Common myeloid progenitor, CD34-positive (primary cell): ENCODE measurements at regions of chr14 and their contacts with region 1.

Region 1: DNA sequence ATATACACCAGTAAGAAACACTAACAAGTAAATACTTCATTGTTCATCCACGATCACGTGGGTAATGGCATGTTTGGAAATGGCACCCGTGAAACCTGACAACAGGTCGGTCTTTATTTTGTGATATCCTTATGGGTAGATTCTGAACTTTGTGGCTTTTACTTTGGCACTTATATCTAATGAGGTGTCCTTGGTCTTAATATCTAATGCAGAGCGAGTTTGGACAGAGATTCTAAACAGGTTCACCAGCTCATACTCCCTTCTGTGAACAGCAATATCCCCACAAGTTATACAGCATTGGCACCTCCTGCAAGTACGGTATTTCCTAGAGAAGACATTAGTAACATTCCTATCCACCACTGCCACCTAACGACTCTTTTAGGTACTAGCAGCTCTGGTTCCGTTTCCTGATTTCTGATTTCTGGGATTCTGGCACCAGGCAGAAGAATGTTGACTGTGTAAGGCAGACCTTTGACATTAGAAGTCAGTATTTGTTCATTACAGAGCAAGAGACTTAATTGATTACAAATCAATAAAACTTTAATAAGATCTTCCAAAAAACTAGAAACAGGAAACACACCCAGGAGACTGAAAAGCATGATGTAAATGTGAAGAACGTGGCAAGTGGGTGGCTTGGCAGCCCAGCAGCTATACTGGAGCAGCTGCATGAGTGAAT is 2.4 kb downstream of the ANG start:
- DNase-seq: peak; percentile 75 to 85 (median 82)
- H3K4me3 ChIP-seq: no peak overlapping the region
- H3K27ac ChIP-seq: no peak overlapping the region
- H3K4me1 ChIP-seq: no peaks in the 10 kb centered on the region
- H3K27me3 ChIP-seq: no peaks in the 10 kb centered on the region

Region 2: DNA sequence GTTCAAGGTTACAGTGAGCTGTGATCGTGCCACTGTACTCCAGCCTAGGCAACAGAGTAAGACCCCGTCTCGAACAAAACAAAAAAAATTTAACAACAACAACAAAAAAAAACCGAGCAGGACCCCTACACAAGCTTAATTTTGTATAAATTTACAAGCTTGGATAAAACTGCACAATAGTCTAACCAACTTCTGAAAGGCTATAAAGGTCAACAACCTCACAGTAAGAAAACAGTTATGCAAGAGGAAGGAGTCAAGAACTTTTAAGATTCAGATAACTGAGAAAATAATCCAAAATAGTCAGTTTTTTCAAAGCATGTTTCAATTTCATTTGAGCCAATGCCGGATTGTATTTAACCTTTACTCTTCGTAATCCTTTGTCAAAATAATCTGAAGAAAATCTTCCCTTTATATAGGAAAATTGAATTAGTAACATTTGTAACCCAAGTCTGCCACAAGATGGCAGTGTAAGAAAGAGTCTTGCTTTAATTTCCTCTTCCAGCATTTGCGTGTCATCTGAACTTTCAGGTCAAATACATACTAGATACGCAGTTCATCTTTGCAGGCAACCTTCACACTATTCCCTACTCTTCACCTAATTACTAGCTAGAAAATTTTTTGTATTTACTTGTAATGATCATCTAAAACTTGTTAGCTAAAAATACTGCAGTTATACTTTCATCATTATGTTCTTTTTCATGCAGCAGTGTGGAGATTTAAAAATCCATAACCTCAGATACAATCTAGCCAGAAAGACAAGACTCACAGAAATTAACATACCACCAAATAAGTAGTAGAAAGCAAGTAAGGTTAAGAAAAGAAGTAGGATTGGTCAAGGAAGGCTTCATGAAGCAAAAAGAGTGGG is 363.7 kb before region 1 on chr14:
- CTCF ChIA-PET with region 1: interaction called, 20 read pairs
- POLR2A ChIA-PET with region 1: no interaction called
- DNase-seq: peak; percentile 73 to 77 (median 75)
- H3K4me3 ChIP-seq: no peak overlapping the region
- H3K27ac ChIP-seq: no peak overlapping the region
- H3K4me1 ChIP-seq: peaks cover under 1 to 15% (median 4%) of the 10 kb centered on the region in 4 experiments
- H3K27me3 ChIP-seq: no peaks in the 10 kb centered on the region

Region 3: GRCh38 chr14:20477211-20477876 is 213.6 kb before region 1 on chr14:
- CTCF ChIA-PET with region 1: no interaction called
- POLR2A ChIA-PET with region 1: no interaction called
- DNase-seq: peak; percentile 83 to 96 (median 92)
- H3K4me3 ChIP-seq: peak overlapping the region in 2 of 7 experiments; percentile 13 to 20
- H3K27ac ChIP-seq: peak overlapping the region; percentile 10 to 52
- H3K4me1 ChIP-seq: peaks cover 8 to 26% (median 23%) of the 10 kb centered on the region in 4 experiments
- H3K27me3 ChIP-seq: no peaks in the 10 kb centered on the region

Region 4: DNA sequence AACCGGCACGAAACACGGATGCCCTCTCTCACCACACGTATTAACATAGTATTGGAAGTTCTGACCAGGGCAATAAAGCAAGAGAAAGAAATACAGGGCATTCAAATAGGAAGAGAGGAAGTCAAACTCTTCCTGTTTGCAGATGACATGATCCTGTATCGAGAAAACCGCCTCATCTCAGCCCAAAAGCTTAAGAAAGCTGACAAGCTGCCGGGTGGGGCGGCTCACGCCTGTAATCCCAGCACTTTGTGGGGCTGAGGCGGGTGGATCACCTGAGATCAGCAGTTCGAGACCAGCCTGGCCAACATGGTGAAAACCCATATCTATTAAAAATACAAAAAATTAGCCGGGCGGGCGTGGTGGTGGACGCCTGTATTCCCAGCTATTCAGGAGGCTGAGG is 67.2 kb before region 1 on chr14:
- CTCF ChIA-PET with region 1: interaction called, 13 read pairs
- POLR2A ChIA-PET with region 1: no interaction called
- DNase-seq: peak in 1 of 3 donors; percentile 38
- H3K4me3 ChIP-seq: peak overlapping the region in 2 of 7 experiments; percentile 32 to 41
- H3K27ac ChIP-seq: no peak overlapping the region
- H3K4me1 ChIP-seq: peaks cover 11 to 36% (median 31%) of the 10 kb centered on the region in 4 experiments
- H3K27me3 ChIP-seq: peaks cover 0 to 34% (median 17%) of the 10 kb centered on the region in 5 experiments

Region 5: DNA sequence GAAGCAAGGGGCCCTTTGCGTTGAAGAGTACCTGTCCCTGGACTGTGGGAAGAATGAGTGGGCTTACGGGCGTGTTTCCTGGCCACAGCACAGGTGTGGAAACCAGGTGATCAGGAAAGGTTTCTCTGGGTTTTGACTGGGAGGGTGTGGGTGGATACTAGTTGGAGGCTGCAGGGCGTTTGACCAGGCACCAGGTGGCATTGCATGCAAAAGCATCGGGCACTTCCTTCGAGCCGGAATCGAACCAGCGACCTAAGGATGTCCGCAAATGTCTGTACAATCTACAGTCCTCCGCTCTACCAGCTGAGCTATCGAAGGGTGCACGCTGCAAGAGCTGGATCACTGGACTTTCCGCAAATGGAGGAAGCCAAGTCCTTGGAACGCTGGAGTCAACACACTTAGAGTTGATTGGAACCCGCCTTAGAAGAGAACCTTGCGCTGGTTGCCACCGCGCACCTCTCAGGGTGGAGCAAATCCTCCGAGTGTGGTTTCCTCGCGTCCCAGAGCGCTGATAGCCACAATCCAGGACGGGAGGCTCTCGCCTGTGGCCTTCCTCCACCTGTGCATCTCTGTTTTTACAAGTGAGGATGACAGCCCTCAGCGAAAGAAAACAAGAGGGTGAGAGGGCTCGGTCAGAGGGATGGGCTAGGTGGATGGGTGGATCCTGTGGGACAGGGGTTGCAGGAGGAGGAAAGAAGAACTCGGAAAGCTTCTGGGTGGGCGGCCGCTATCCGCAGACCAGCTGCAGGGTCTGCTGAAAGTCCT is 27.8 kb before region 1 on chr14:
- CTCF ChIA-PET with region 1: interaction called, 179 read pairs
- POLR2A ChIA-PET with region 1: no interaction called
- DNase-seq: peak; percentile 82 to 91 (median 90)
- H3K4me3 ChIP-seq: peak overlapping the region; percentile 30 to 81 (median 69)
- H3K27ac ChIP-seq: no peak overlapping the region
- H3K4me1 ChIP-seq: peaks cover 0 to 18% (median 13%) of the 10 kb centered on the region in 4 experiments
- H3K27me3 ChIP-seq: peaks cover 0 to 22% (median 11%) of the 10 kb centered on the region in 5 experiments